A549 (cell line): ENCODE measurements at regions of chr7 and their contacts with region 1.

Region 1: DNA sequence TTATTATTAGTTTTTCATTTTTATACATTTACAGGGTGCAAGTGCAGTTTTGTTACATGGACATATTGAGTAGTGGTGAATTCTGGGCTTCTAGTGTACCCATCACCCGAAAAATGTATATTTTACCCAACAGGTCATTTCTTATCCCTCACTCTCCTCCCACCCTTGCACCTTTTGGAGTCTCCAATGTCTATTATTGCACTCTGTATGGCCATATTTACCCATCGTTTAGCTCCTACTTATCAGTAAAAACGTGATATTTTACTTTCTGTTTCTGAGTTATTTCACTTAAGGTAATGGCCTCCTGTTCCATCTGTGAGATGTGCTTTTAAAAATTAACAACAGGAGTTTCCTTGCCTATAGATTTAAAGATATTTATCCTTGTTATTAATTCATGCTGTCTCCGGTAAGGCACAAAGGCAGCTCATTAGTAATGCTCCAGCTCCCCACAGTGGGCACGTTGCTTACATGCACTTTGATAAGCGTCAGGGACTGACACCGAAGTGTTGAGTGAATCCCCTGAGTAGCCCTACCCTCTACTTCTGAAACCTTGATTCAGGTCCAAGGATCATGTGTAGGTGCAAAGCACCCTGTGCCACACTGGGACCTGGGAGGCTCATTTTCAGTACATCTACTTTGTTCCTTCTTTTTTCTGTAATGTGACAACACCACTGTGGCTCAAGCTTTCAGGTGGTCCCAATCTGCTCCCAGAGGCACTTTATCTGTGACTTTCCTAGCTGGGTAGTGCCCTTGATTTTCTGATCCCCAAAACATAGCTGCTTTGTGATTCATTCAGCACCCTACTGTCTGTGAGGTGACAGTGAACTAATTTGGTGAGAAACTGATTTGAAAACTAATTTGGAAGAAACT is 27.3 kb downstream of the HYAL4 start:
- DNase-seq: peak; percentile 31 to 73
- ATAC-seq: peak; percentile 97 to 99
- H3K4me3 ChIP-seq: no peak overlapping the region
- H3K27ac ChIP-seq: no peak overlapping the region
- H3K4me1 ChIP-seq: no peaks in the 10 kb centered on the region
- CTCF ChIP-seq: peak; percentile 86
- EP300 ChIP-seq: no peak
- POLR2A ChIP-seq: no peak
- RAD21 ChIP-seq: peak; percentile 88 to 90

Region 2: GRCh38 chr7:123494193-123494796 is 377.9 kb before region 1 on chr7:
- CTCF ChIA-PET with region 1: interaction called, 24 read pairs
- POLR2A ChIA-PET with region 1: no interaction called
- DNase-seq: peak; percentile 20 to 40
- ATAC-seq: peak in 1 of 2 experiments; percentile 70; a peak in 3 of 6 replicates
- H3K4me3 ChIP-seq: no peak overlapping the region
- H3K27ac ChIP-seq: no peak overlapping the region
- H3K4me1 ChIP-seq: no peaks in the 10 kb centered on the region
- CTCF ChIP-seq: peak; percentile 73
- EP300 ChIP-seq: no peak
- POLR2A ChIP-seq: no peak
- RAD21 ChIP-seq: peak; percentile 74

Region 3: DNA sequence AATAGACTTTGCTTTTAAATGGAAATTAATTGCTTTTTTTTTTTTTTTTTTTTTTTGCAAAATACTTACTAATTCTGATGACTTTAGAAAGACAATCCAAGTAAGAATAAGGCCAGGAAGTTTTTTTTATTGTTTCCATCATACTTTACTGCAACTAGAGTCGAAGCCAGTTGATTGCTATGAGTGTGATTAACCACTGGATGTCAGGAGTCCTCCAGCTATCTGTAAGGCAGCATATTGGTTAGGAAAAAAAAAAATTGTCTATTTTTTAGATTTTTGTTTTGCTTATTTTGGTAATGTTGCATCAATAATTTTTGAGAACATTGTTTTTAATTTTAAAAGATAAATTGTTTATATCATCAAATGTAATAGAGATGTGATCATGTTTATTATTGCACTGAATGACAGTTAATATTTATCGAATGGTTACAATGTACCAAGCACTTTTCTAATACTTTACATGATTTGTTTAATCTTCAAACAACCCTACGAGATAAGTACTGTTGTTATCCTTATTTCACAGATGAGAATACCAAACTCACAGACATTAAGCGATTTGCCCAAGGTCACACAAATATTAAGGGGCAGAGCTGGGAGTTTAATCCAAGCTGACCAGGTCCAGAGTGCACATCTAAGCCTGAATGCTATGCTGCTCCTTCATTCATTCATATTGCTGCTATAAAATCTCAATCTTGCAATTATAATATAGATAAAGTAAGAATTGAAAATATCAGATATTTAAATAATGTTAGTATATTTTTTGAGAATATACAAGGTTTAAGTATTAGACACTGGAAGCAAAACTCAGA is 236.5 kb before region 1 on chr7:
- CTCF ChIA-PET with region 1: interaction called, 39 read pairs
- POLR2A ChIA-PET with region 1: no interaction called
- DNase-seq: peak; percentile 13 to 39
- ATAC-seq: peak; percentile 76 to 87; a peak in 5 of 6 replicates
- H3K4me3 ChIP-seq: no peak overlapping the region
- H3K27ac ChIP-seq: no peak overlapping the region
- H3K4me1 ChIP-seq: no peaks in the 10 kb centered on the region
- CTCF ChIP-seq: peak; percentile 69
- EP300 ChIP-seq: no peak
- POLR2A ChIP-seq: no peak
- RAD21 ChIP-seq: peak; percentile 73 to 83

Region 4: DNA sequence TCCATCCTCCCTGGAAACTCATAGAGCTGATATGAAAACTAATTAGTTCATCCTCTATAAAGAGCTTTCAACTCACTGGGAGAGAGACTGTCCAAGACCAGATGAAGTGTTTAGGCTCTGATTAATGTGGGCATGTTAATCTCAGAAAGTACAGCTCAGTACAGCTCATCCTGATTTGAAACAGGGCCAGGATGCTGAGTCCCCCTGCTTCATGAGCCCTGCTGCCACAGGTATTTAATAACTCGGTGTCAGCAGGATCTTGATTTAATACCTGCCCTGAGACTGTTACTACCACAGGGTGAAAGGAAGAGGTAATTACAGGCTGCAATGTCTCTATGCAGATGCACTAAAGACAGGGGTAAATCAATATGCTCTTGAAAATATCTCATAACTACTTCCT is 205.7 kb before region 1 on chr7:
- CTCF ChIA-PET with region 1: interaction called, 10 read pairs
- POLR2A ChIA-PET with region 1: no interaction called
- DNase-seq: no peak
- ATAC-seq: peak in 1 of 2 experiments; percentile 21; a peak in 2 of 6 replicates
- H3K4me3 ChIP-seq: no peak overlapping the region
- H3K27ac ChIP-seq: no peak overlapping the region
- H3K4me1 ChIP-seq: no peaks in the 10 kb centered on the region
- CTCF ChIP-seq: no peak
- EP300 ChIP-seq: no peak
- POLR2A ChIP-seq: no peak
- RAD21 ChIP-seq: no peak

Region 5: GRCh38 chr7:123770378-123770777 is 101.9 kb before region 1 on chr7:
- CTCF ChIA-PET with region 1: interaction called, 22 read pairs
- POLR2A ChIA-PET with region 1: no interaction called
- DNase-seq: peak; percentile 84 to 86
- ATAC-seq: peak; percentile 90 to 96
- H3K4me3 ChIP-seq: peak overlapping the region; percentile 10; the same call in 1 of the 3 replicates
- H3K27ac ChIP-seq: peak overlapping the region; percentile 53 to 80
- H3K4me1 ChIP-seq: peaks cover 60% of the 10 kb centered on the region
- CTCF ChIP-seq: no peak
- EP300 ChIP-seq: peak in 1 of 2 experiments; percentile 32; a peak in 1 of 5 replicates
- POLR2A ChIP-seq: no peak
- RAD21 ChIP-seq: no peak; a peak in 1 of 5 replicates

Region 6: GRCh38 chr7:123888192-123888591 is 16.0 kb after region 1 on chr7:
- CTCF ChIA-PET with region 1: interaction called, 11 read pairs
- POLR2A ChIA-PET with region 1: no interaction called
- DNase-seq: no peak
- ATAC-seq: no peak
- H3K4me3 ChIP-seq: no peak overlapping the region
- H3K27ac ChIP-seq: no peak overlapping the region
- H3K4me1 ChIP-seq: no peaks in the 10 kb centered on the region
- CTCF ChIP-seq: no peak
- EP300 ChIP-seq: no peak
- POLR2A ChIP-seq: no peak
- RAD21 ChIP-seq: no peak

Region 7: DNA sequence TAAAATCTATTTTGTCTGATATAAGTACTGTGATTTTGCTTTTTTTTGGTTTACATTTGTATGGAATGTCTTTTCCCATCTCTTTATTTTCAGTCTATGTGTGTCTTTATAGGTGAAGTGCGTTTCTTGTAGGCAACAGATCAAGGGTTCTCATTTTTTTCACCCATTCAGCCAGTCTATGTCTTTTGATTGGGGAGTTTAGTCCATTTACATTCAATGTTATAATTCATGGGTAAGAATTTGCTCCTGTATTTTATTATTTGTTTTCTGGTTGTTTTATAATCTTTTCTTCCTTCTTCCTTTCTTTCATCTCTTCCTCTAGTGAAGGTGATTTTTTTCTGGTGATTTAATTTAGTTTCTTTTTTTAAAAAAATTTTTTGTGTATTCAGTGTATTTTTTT is 265.4 kb after region 1 on chr7:
- CTCF ChIA-PET with region 1: no interaction called
- POLR2A ChIA-PET with region 1: no interaction called
- DNase-seq: no peak
- ATAC-seq: no peak
- H3K4me3 ChIP-seq: no peak overlapping the region
- H3K27ac ChIP-seq: no peak overlapping the region
- H3K4me1 ChIP-seq: no peaks in the 10 kb centered on the region
- CTCF ChIP-seq: no peak
- EP300 ChIP-seq: no peak
- POLR2A ChIP-seq: no peak
- RAD21 ChIP-seq: no peak